PC-3 (cell line): ENCODE measurements at regions of chr12 and their contacts with region 1.

Region 1: GRCh38 chr12:131104463-131105350 is 151.0 kb downstream of the ADGRD1 start:
- DNase-seq: peak; percentile 86
- ATAC-seq: peak; percentile 100
- H3K4me3 ChIP-seq: no peak overlapping the region
- H3K27ac ChIP-seq: no peak overlapping the region
- H3K4me1 ChIP-seq: no peaks in the 10 kb centered on the region
- H3K27me3 ChIP-seq: peaks cover 52% of the 10 kb centered on the region
- CTCF ChIP-seq: peak; percentile 96

Region 2: GRCh38 chr12:131132118-131132892 is 27.6 kb after region 1 on chr12:
- CTCF ChIA-PET with region 1: interaction called, 3 read pairs
- POLR2A ChIA-PET with region 1: no interaction called
- intact Hi-C with region 1: loop called (anchors 1 kb)
- DNase-seq: peak; percentile 69
- ATAC-seq: peak; percentile 61
- H3K4me3 ChIP-seq: no peak overlapping the region
- H3K27ac ChIP-seq: no peak overlapping the region
- H3K4me1 ChIP-seq: peaks cover 8% of the 10 kb centered on the region
- H3K27me3 ChIP-seq: peaks cover 46% of the 10 kb centered on the region
- CTCF ChIP-seq: peak; percentile 89

Region 3: DNA sequence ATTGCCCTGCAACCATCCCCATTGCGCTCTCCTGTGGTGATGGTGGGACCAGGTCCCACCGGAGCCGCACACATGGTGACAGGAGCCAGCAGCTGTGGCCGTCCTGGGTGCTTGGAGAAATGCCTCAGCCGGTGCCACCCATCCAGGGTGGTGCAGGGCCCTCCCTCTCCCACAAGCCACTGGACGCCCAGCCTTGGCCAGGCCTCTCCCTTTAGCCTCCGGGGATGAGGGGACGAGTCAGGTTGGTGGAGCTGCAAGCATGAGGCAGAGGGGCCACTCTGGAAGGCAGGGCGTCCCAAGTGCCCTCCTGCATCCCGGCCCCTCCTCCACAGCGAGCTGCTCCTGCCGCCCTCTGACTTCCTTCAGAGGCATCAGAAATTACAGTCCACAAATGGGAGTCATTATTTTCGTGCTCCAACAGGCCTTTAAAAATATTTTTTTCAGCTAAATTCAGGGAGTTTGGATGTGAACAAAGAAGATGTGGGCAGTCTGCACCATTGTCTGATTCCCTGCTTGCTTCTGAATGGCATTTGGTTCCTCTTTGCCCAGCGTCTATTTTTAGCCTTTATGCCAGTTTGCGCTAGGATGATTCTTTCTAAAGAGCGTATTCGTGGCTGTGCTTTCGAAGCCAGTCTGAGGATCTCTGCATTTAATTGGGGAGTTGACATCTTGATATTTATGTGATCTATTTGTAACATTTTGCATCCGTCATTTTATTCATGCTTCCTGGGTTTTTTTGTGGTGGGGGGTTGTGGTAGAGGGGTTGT is 38.4 kb after region 1 on chr12:
- CTCF ChIA-PET with region 1: no interaction called
- POLR2A ChIA-PET with region 1: no interaction called
- intact Hi-C with region 1: no loop called
- DNase-seq: peak; percentile 65
- ATAC-seq: peak; percentile 69
- H3K4me3 ChIP-seq: no peak overlapping the region
- H3K27ac ChIP-seq: no peak overlapping the region
- H3K4me1 ChIP-seq: peaks cover 11% of the 10 kb centered on the region
- H3K27me3 ChIP-seq: peaks cover 55% of the 10 kb centered on the region
- CTCF ChIP-seq: no peak

Region 4: DNA sequence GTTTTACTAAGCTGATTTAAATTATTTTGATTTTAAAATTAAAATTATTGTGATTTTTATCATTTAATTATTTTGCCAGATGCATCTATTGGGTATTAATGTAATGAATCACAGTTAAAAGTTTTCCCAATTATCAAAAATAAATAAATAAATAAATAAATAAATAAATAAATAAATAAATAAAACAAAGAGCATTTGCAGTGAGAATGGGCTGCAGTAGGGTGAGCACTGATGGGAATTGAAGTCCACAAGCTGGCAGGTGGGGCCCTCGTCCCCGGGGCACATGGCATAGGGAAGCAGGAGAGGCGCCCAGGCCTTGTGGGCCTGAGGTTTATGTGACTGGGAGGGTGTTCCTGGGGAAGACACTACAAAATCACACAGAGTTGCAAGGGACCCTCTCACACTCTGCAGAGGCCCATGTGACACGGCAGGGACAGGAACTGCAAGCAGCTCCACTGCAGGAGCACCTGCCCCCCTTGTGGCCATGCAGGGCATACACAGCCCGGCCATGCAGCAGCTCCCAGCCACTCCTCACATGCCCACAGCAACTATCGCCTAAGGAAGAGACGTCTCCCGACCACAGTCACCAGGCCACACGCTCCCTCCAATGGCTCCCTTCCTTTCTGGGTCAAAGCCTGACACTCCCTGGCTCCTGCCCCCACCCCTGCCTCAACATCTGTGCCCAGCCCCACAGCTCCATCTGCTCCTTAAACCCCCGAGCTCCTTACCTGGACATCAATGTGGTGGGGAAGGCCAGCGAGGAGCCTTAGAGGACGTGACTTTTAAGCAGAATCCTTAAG is 349.9 kb after region 1 on chr12:
- CTCF ChIA-PET with region 1: interaction called, 8 read pairs
- POLR2A ChIA-PET with region 1: no interaction called
- intact Hi-C with region 1: loop called (anchors 1 kb)
- DNase-seq: peak; percentile 74
- ATAC-seq: peak; percentile 100
- H3K4me3 ChIP-seq: no peak overlapping the region
- H3K27ac ChIP-seq: no peak overlapping the region
- H3K4me1 ChIP-seq: no peaks in the 10 kb centered on the region
- H3K27me3 ChIP-seq: peaks cover 37% of the 10 kb centered on the region
- CTCF ChIP-seq: peak; percentile 89